Posterior vena cava (tissue), 2 donors: ENCODE measurements at regions of chr9 and their contacts with region 1.

Region 1: DNA sequence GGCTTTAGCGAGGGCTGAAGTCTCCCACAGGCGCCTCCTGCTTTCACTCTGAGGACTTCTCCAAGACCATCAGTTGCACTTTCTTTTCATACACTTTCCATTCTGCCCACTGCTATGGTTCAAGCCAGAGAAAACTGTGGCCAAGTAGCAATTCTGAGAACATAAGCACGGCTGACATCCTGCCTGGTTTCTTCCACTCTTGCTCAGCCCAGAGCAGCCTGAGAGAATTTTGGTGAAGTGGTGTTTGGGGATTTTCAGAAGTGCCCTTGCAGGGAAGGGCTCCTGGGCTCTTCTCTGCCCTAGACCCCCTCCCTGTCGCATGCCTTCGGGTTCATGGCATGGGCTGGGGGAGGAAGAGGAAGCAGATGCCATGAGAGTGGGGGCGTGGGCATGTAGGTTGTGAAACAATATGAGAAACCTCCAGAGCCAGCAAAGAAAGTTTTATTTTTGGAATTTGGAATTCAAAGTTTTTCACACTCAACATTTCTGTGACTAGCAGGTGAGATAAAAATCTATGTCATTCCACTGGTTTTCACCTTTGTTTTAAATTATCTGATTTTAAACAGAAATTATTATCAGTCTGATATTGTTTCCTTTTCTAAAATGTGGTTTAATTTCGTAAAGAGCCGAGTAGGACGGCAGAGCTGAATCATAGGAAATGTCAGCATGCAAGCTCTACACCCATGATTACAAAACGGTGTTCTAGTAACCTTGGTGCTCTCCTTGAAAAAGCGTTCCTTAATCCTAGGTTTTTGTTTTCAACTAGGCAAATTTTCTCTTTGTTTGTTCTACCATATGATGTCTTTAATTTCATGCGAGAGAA is 27.8 kb upstream of the TNFSF8 start:
- DNase-seq: peak; percentile 82

Region 2: DNA sequence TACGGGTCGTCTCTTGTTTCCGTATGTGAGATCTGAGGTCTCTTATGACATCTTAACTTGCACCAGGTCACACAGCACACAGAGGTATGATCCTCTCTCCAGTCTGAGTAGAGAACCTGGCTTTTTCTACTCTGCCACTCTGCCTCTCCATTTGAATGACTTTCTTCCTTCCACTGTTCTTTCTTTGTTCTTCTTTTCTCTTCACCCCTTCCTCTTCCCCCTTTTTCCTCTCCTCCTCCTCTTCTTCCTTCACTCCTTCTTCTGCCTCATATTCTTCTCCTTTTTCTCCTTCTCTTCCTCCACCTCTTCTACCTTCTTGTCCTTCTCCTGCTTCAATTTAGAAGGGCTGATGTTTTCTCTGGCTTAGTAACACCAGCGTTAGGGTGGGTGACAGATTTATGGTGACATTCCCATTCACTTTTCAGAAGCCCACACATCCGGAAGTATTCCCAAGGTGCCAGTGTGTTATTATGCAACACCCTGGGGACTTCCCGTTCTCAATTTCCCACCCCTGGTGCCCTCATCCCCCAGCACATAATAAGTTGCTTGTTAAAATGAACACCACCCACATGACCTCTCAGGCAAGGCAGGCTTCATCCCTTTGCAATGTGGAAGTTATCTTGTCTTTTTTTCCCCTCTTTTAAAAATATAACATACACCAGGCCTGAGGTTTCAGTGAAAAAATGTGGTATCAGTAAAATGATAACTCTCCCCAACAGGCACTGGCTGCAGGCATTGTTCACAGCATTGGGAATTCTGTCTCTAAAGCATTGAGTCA is 1317.4 kb after region 1 on chr9:
- intact Hi-C with region 1: loop called in 1 of 2 experiments (anchors 5 kb)
- DNase-seq: no peak